Mammary epithelial cell (primary cell): ENCODE measurements at regions of chr6 and their contacts with region 1.

Region 1: DNA sequence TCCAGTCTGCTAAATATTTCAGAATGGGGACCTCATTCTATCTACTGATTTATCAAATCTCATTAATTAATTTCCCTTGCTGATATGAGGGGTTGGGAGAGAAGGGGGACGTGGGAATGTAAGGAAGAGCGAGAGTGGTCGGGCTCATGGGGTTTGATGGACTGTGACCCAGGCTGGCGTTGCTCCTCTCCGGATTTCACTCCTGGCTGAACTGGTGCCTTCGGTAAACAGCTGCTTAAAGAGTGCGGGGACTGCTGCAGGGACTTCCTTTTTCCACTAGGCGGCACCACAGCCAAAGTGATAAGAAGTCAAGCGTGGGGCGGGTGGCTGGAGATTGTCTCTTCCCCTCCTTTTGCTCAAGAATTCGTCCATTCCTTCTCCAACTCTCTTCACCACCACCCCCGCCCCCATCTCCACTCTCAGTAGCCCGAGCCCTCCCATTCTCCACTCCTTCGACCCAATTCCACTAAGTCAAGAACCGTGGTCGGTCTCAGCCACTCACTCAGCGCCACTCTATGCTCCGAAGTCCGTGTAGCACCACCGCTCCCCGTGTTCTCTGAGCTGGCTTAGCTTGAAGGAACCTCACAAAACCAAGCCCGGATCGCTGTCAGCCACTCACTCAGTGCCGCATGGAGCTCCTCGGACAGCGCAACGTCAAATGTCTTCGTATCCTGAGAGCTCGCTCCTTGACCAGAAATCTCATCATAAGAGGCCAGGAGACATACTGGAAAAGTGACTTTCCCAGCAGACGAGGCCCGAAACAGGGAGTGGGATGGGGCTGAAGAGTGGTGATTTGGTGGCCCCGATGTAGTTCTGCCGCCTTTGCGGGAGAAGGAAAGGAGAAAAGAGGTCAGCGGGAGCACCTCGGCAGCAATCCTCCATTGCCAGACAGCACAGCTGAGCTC is 9.7 kb downstream of the TRIM31 start:
- DNase-seq: peak; percentile 73
- H3K4me3 ChIP-seq: peak overlapping the region; percentile 43 to 53 (median 43)
- H3K27ac ChIP-seq: no peak overlapping the region
- H3K4me1 ChIP-seq: peaks cover 33% of the 10 kb centered on the region
- H3K27me3 ChIP-seq: no peaks in the 10 kb centered on the region
- CTCF ChIP-seq: peak; percentile 91 to 94

Region 2: DNA sequence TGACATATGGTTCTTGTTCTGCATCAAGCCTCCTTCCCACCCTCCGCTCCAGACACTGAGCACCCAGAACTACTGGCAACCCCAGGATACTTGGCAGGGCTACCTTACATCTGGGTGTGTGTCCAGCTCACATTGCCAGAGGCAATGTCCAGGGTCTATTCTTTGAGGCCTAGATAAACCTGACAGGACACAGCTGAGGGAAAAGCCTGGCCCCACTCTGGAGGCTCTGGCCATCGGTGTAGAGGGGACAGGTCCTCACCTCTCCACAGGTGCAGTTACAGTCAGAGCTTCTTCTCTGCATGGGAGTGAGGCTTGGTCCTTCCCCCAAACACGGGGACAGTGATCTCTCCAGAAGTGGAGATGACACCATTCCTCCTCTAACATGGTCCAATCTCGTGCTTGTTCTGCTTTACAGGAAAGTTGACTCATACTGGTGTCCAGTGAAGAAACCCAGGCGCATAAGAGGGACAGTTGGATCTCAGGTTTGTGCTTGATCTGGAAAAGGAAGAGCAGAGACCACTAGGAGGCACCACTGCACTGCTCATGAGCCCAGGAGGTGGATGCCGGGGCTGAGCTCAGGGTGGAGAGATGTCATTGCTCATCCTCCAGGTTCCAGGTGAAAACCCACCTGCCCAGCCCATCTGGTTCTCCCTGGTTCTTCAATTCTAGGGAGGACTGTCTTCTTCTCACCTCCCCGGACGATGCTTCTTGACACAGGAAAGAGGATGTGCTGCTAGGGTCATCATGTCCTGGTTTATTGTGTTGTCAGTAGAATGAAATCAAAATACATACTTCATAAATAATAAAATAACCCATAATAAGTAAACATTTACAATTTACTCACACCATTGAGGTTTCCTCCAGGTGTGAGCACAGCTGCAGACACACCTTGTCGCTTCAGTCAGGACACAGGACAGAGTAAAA is 365.3 kb before region 1 on chr6:
- CTCF ChIA-PET with region 1: no interaction called
- dilution Hi-C with region 1: no loop called
- in situ Hi-C with region 1: no loop called
- intact Hi-C with region 1: loop called (anchors 5 kb)
- DNase-seq: peak; percentile 74
- H3K4me3 ChIP-seq: no peak overlapping the region
- H3K27ac ChIP-seq: no peak overlapping the region
- H3K4me1 ChIP-seq: peaks cover 14% of the 10 kb centered on the region
- H3K27me3 ChIP-seq: no peaks in the 10 kb centered on the region
- CTCF ChIP-seq: peak; percentile 76 to 88

Region 3: DNA sequence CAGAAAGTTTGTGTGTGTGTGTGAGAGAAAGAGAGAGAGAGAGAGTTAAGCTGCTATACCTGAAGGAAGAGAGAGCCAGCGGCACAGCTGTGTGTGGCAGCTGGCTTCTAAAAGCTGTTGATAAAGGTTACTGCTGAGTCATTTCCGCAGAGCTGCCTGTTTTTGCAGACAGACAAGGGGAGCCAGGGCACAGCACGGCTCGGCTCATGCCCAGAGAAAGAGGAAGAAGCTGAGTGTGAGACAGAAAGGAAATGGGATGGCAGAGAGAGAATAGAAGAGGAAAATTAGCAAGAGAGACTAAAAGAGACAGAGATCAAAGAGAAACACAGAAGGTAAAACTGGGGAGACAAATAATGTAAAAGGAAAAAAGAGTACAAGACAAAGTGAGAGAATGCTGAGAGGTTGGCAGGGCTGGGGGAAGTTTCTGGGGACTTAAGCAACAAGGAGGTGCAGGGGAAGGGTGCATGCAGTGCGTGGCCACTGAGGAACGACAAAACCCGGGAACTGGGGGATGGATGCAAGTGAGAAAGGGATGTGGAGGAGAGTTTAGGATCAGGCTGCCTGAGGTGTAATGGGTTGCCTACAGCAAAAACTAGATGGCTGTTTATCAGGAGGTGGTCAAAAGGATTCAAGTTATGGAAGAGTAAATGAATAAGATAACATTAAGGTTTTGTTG is 138.2 kb before region 1 on chr6:
- CTCF ChIA-PET with region 1: no interaction called
- dilution Hi-C with region 1: no loop called
- in situ Hi-C with region 1: no loop called
- intact Hi-C with region 1: loop called (anchors 5 kb)
- DNase-seq: peak; percentile 84
- H3K4me3 ChIP-seq: peak overlapping the region; percentile 32 to 61 (median 45)
- H3K27ac ChIP-seq: peak overlapping the region; percentile 66
- H3K4me1 ChIP-seq: peaks cover 39% of the 10 kb centered on the region
- H3K27me3 ChIP-seq: no peaks in the 10 kb centered on the region
- CTCF ChIP-seq: no peak

Region 4: GRCh38 chr6:30075161-30075986 is 27.8 kb before region 1 on chr6 and contains the start of gene RNF39:
- CTCF ChIA-PET with region 1: interaction called, 3 read pairs
- dilution Hi-C with region 1: no loop called
- in situ Hi-C with region 1: no loop called
- intact Hi-C with region 1: loop called (anchors 1 kb)
- DNase-seq: peak; percentile 79
- H3K4me3 ChIP-seq: peak within 1 kb of the TSS; percentile 74 to 77 (median 77)
- H3K27ac ChIP-seq: peak within 1 kb of the TSS; percentile 62
- H3K4me1 ChIP-seq: peaks cover 28% of the 10 kb centered on the region
- H3K27me3 ChIP-seq: peaks cover 9% of the 10 kb centered on the region
- CTCF ChIP-seq: peak in 1 of 2 donors; percentile 63
- total RNA-seq, gene RNF39: 2.5 to 5.4 TPM

Region 5: GRCh38 chr6:30169658-30170614 is 66.7 kb after region 1 on chr6:
- CTCF ChIA-PET with region 1: no interaction called
- dilution Hi-C with region 1: no loop called
- in situ Hi-C with region 1: loop called in 1 of 2 experiments (anchors 5 kb)
- intact Hi-C with region 1: loop called (anchors 1 kb)
- DNase-seq: peak; percentile 41
- H3K4me3 ChIP-seq: no peak overlapping the region
- H3K27ac ChIP-seq: no peak overlapping the region
- H3K4me1 ChIP-seq: no peaks in the 10 kb centered on the region
- H3K27me3 ChIP-seq: peaks cover 14% of the 10 kb centered on the region
- CTCF ChIP-seq: peak; percentile 85 to 90

Region 6: DNA sequence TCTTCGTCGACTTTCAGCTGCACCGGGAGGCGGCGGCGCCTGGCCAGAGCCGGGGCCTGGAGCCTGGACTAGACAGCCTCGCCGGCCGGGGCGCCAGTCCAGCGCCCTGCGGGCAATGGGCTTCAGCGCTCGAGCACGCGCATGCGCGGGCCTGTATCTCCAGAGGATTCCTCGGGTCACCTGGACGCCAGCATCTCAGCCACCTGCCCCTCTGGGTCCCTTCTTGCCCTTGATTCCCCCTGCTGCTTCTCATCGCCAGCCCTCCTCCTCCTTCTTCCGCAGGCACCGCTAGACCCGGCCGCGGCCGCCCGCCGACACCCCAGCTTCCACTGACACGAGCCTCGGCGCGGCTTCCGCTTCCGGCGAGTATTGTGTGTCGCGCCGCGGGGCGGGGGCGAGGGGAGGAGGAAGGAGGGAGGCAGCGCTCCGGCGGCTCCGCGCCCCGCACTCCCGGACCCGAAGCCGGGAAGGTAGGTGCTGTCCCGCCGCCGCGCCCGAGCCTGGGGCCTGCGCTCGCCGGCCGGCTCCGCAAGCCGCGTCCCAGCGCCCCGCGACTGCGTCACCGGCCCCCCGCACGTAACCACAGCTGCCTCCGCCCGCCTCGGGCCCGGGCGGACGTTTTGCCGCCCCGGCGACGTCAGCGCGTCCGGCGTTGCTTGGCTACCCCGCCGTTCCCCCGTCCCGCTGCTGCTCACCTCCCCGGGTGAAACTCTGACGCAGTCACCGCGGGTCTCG is 223.5 kb after region 1 on chr6 and contains the start of gene TRIM39:
- CTCF ChIA-PET with region 1: no interaction called
- dilution Hi-C with region 1: no loop called
- in situ Hi-C with region 1: no loop called
- intact Hi-C with region 1: loop called (anchors 5 kb)
- DNase-seq: peak; percentile 93
- H3K4me3 ChIP-seq: peak within 1 kb of the TSS; percentile 66 to 70 (median 69)
- H3K27ac ChIP-seq: peak within 1 kb of the TSS; percentile 95
- H3K4me1 ChIP-seq: peaks cover 19% of the 10 kb centered on the region
- H3K27me3 ChIP-seq: no peaks in the 10 kb centered on the region
- CTCF ChIP-seq: no peak
- total RNA-seq, gene TRIM39: 13.3 to 14.0 TPM